ENCODE measurements at regions of chr10 and their contacts with region 1.

Region 1: DNA sequence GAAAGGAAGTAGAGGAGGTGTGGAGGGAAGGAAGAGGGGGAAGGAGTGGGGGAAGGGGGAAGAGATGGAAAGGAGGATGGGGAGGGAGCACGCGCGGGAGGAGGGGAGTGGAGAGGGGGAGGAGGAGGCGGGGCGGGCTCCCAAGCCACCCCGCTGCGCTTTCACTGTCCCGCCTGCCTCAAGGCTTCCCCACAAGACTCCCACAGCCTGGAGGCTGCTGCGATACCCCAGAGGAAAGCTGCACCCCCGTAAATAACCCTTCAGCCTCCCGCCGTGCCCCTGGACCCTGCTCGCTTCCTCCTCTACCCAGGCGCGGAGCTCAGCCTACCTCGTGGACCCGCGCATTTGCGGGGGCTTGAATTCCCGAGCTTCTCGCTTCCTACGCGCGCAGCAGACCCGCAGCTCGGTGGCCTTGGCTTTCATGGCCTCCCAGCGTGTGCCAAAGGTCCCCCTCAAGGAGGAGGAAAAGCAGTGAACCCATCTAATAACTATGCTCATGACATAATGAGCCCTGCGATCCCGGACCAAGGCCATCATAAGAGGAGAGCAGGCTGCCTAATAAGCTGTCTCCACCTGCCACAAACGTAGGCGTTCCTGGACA is at the start of gene C10orf67:
- DNase-seq: no peak
- H3K4me3 Mint-ChIP-seq: peak within 1 kb of the TSS; percentile 66
- H3K27ac Mint-ChIP-seq: peak within 1 kb of the TSS; percentile 31
- H3K4me1 Mint-ChIP-seq: peaks cover 20% of the 10 kb centered on the region
- H3K27me3 Mint-ChIP-seq: no peaks in the 10 kb centered on the region
- CTCF ChIP-seq: no peak
- total RNA-seq, gene C10orf67: 0.15 and 0.21 TPM in 2 replicates

Region 2: DNA sequence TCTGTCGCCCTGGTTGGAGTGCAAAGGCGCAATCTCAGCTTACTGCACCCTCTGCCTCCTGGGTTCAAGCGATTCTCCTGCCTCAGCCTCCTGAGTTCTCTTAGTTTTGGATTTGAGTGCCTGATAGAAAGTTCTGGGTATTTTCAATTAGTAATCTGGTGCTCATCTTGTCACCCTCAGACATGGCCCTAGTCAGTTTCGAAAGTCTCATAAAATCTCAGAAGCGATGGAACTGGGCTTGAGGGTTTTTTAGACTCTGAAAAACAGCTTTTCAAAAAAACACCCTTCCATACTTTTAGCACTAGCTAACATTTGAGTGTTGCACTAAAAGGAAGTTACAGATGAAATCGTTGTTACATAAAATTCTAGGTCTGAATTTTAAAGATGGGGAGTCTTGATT is 620.6 kb before region 1 on chr10:
- CTCF ChIA-PET with region 1: no interaction called
- POLR2A ChIA-PET with region 1: no interaction called
- intact Hi-C with region 1: no loop called
- DNase-seq: no peak
- H3K4me3 Mint-ChIP-seq: no peak overlapping the region
- H3K27ac Mint-ChIP-seq: no peak overlapping the region
- H3K4me1 Mint-ChIP-seq: no peaks in the 10 kb centered on the region
- H3K27me3 Mint-ChIP-seq: peaks cover 11% of the 10 kb centered on the region
- CTCF ChIP-seq: no peak

Region 3: GRCh38 chr10:23110722-23111516 is 233.4 kb before region 1 on chr10:
- CTCF ChIA-PET with region 1: no interaction called
- POLR2A ChIA-PET with region 1: no interaction called
- intact Hi-C with region 1: no loop called
- DNase-seq: no peak
- H3K4me3 Mint-ChIP-seq: no peak overlapping the region
- H3K27ac Mint-ChIP-seq: no peak overlapping the region
- H3K4me1 Mint-ChIP-seq: no peaks in the 10 kb centered on the region
- H3K27me3 Mint-ChIP-seq: no peaks in the 10 kb centered on the region
- CTCF ChIP-seq: no peak

Region 4: DNA sequence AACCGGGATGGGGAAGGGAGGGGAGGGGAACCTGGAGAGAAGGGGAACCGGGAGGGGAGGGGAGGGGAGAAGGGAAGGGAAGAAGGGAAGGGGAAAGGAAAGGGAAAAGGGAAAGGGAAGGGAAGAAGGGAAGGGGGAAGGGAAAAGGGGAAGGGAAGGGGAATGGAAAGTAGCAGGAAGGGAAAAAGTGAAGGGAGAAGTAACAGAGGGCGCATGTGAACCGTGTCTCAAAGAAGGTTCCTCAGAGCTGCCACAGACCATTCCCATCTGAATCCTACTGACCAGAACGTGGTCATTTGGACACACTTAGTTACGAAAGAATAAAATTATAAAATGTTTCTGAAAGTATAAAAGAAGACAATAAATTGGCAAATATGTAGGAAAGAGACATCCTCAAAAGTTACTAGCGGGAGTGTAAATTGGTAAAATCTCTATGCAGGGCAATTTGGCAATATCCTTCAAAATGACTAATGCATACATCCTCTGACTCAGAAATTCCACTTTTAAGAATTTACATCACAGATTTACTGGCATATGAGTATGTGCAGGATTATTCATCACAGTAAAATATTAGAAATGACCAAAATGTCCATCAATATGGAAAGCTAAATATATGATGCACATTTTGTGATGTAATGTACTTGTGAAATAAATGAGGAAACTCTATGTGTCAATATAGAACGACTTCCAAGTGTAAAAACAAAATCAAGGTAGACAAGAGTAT is 12.6 kb before region 1 on chr10:
- CTCF ChIA-PET with region 1: interaction called, 7 read pairs
- POLR2A ChIA-PET with region 1: interaction called, 33 read pairs
- intact Hi-C with region 1: no loop called
- DNase-seq: peak; percentile 88
- H3K4me3 Mint-ChIP-seq: no peak overlapping the region
- H3K27ac Mint-ChIP-seq: peak overlapping the region; percentile 11
- H3K4me1 Mint-ChIP-seq: no peaks in the 10 kb centered on the region
- H3K27me3 Mint-ChIP-seq: no peaks in the 10 kb centered on the region
- CTCF ChIP-seq: no peak

Region 5: GRCh38 chr10:23362879-23363792 is 18.8 kb after region 1 on chr10:
- CTCF ChIA-PET with region 1: interaction called, 5 read pairs
- POLR2A ChIA-PET with region 1: interaction called, 16 read pairs
- intact Hi-C with region 1: no loop called
- DNase-seq: no peak
- H3K4me3 Mint-ChIP-seq: no peak overlapping the region
- H3K27ac Mint-ChIP-seq: no peak overlapping the region
- H3K4me1 Mint-ChIP-seq: peaks cover 24% of the 10 kb centered on the region
- H3K27me3 Mint-ChIP-seq: no peaks in the 10 kb centered on the region
- CTCF ChIP-seq: no peak

Region 6: GRCh38 chr10:23383637-23384036 is 39.3 kb after region 1 on chr10:
- CTCF ChIA-PET with region 1: interaction called, 3 read pairs
- POLR2A ChIA-PET with region 1: interaction called, 13 read pairs
- intact Hi-C with region 1: no loop called
- DNase-seq: no peak
- H3K4me3 Mint-ChIP-seq: no peak overlapping the region
- H3K27ac Mint-ChIP-seq: peak overlapping the region; percentile 12
- H3K4me1 Mint-ChIP-seq: peaks cover 9% of the 10 kb centered on the region
- H3K27me3 Mint-ChIP-seq: no peaks in the 10 kb centered on the region
- CTCF ChIP-seq: no peak